ENCODE measurements at regions of chr11 and their contacts with region 1.

Region 1: DNA sequence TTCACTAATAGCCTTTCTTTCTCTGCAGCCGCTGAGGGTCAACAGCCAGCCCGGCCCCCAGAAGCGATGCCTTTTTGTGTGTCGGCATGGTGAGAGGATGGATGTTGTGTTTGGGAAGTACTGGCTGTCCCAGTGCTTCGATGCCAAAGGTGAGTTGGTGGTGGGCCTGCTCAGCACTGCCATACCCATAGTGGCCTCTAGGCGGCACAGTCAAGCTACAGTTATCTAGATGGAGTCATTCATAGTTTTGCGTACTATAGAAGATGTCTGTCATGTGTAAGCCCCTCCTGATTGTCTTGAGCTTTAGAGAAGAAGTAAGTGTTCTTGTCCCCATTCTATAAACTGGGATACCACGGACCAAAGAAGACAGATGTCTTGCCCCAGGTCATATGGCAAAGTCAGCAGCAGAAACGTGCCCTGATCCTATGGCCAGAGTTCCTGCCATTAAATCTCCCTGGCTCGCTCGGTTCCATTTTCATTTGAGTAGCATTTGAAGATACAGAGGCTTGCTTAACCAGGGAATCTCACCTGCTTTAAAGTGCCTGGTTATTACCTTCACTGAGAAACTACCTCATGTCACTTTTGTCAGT is 42.1 kb upstream of the CRTAM start:
- DNase-seq: peak; percentile 55 to 85 (median 75)
- ATAC-seq: peak; percentile 100
- H3K4me3 ChIP-seq: no peak overlapping the region
- H3K4me3 Mint-ChIP-seq: no peak overlapping the region
- H3K27ac ChIP-seq: no peak overlapping the region
- H3K27ac Mint-ChIP-seq: no peak overlapping the region
- H3K4me1 ChIP-seq: no peaks in the 10 kb centered on the region
- H3K4me1 Mint-ChIP-seq: peaks cover 4% of the 10 kb centered on the region
- H3K27me3 ChIP-seq: no peaks in the 10 kb centered on the region
- H3K27me3 Mint-ChIP-seq: no peaks in the 10 kb centered on the region
- CTCF ChIP-seq: peak; percentile 96

Region 2: DNA sequence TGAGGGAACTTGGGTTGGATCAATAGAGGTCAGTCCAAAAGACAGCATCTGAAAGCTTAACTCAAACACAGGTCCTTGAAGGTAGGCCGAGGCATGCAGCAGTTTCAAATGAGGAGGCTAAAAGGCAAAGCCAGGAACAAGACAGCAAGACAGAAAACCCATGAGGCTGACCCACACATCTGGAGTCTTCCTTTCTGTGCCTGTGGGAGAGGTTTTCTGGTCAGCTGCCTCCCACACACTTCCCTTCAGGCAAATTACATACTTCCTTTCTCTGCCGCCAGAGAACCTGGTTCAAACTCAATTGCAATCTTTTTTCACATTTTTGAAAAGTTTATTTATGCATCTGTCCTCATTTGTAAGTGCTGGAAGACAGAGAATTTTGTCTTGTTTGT is 12.3 kb after region 1 on chr11:
- CTCF ChIA-PET with region 1: interaction called, 44 read pairs
- POLR2A ChIA-PET with region 1: interaction called, 3 read pairs
- intact Hi-C with region 1: no loop called
- DNase-seq: no peak
- ATAC-seq: no peak
- H3K4me3 ChIP-seq: no peak overlapping the region
- H3K4me3 Mint-ChIP-seq: no peak overlapping the region
- H3K27ac ChIP-seq: peak overlapping the region in 1 of 2 experiments; percentile 47
- H3K27ac Mint-ChIP-seq: peak overlapping the region; percentile 85
- H3K4me1 ChIP-seq: peaks cover 35% of the 10 kb centered on the region
- H3K4me1 Mint-ChIP-seq: peaks cover 61% of the 10 kb centered on the region
- H3K27me3 ChIP-seq: no peaks in the 10 kb centered on the region
- H3K27me3 Mint-ChIP-seq: no peaks in the 10 kb centered on the region
- CTCF ChIP-seq: no peak

Region 3: DNA sequence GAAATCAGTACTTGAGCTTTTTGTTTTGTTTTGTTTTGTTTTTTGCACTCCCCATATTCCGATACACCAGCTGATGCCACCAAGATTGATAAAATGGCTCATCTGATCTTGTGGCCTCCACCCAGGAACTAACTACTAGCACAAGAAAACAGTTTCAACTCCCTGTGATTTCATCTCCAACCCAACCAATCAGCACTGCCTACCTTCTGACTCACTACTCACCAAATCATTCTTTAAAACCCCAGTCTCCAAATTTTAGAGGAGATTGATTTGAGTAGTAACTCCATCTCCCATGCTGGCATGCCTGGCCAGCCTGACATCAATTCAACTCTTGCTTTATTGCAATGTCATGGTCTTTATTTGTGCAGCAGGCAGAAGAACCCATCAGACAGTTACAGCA is 26.0 kb after region 1 on chr11:
- CTCF ChIA-PET with region 1: interaction called, 38 read pairs
- POLR2A ChIA-PET with region 1: no interaction called
- intact Hi-C with region 1: no loop called
- DNase-seq: no peak
- ATAC-seq: no peak
- H3K4me3 ChIP-seq: no peak overlapping the region
- H3K4me3 Mint-ChIP-seq: no peak overlapping the region
- H3K27ac ChIP-seq: no peak overlapping the region
- H3K27ac Mint-ChIP-seq: no peak overlapping the region
- H3K4me1 ChIP-seq: peaks cover 11% of the 10 kb centered on the region
- H3K4me1 Mint-ChIP-seq: peaks cover 18% of the 10 kb centered on the region
- H3K27me3 ChIP-seq: no peaks in the 10 kb centered on the region
- H3K27me3 Mint-ChIP-seq: no peaks in the 10 kb centered on the region
- CTCF ChIP-seq: no peak

Region 4: GRCh38 chr11:122863704-122864326 is 67.6 kb after region 1 on chr11:
- CTCF ChIA-PET with region 1: interaction called, 472 read pairs
- POLR2A ChIA-PET with region 1: no interaction called
- intact Hi-C with region 1: no loop called
- DNase-seq: peak in 6 of 9 experiments; percentile 10 to 56 (median 38)
- ATAC-seq: no peak
- H3K4me3 ChIP-seq: no peak overlapping the region
- H3K4me3 Mint-ChIP-seq: no peak overlapping the region
- H3K27ac ChIP-seq: no peak overlapping the region
- H3K27ac Mint-ChIP-seq: no peak overlapping the region
- H3K4me1 ChIP-seq: no peaks in the 10 kb centered on the region
- H3K4me1 Mint-ChIP-seq: peaks cover 12% of the 10 kb centered on the region
- H3K27me3 ChIP-seq: no peaks in the 10 kb centered on the region
- H3K27me3 Mint-ChIP-seq: no peaks in the 10 kb centered on the region
- CTCF ChIP-seq: peak; percentile 83

Region 5: DNA sequence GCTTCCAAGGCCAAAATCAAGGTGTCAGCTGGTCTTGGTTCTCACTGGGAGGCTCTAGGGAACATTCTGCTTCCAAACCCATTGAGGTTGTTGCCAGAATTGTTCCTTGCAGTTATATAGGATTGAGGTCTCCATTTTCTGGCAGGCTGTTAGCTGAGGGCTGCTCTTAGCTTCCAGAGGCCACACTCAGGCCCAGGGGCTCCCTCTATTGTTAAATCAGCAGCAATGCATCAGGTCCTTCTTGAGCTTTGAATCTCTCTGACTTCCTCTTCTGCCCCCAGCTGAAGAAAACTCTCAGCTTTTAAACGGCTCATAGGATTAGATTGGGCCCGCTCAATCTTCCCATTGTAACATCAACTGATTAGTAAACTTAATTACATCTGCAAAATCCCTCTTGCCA is 224.7 kb after region 1 on chr11:
- CTCF ChIA-PET with region 1: interaction called, 37 read pairs
- POLR2A ChIA-PET with region 1: interaction called, 3 read pairs
- intact Hi-C with region 1: loop called (anchors 1 kb)
- DNase-seq: peak in 5 of 9 experiments; percentile 5 to 61 (median 20)
- ATAC-seq: peak; percentile 77
- H3K4me3 ChIP-seq: no peak overlapping the region
- H3K4me3 Mint-ChIP-seq: no peak overlapping the region
- H3K27ac ChIP-seq: no peak overlapping the region
- H3K27ac Mint-ChIP-seq: no peak overlapping the region
- H3K4me1 ChIP-seq: no peaks in the 10 kb centered on the region
- H3K4me1 Mint-ChIP-seq: peaks cover 7% of the 10 kb centered on the region
- H3K27me3 ChIP-seq: peaks cover 0 to 2% of the 10 kb centered on the region in 2 experiments
- H3K27me3 Mint-ChIP-seq: peaks cover 2% of the 10 kb centered on the region
- CTCF ChIP-seq: peak; percentile 55

Measured in CD8-positive, alpha-beta T cell (primary cell).